Naive thymus-derived CD4-positive, alpha-beta T cell (primary cell): ENCODE measurements at regions of chr6 and their contacts with region 1.

Region 1: DNA sequence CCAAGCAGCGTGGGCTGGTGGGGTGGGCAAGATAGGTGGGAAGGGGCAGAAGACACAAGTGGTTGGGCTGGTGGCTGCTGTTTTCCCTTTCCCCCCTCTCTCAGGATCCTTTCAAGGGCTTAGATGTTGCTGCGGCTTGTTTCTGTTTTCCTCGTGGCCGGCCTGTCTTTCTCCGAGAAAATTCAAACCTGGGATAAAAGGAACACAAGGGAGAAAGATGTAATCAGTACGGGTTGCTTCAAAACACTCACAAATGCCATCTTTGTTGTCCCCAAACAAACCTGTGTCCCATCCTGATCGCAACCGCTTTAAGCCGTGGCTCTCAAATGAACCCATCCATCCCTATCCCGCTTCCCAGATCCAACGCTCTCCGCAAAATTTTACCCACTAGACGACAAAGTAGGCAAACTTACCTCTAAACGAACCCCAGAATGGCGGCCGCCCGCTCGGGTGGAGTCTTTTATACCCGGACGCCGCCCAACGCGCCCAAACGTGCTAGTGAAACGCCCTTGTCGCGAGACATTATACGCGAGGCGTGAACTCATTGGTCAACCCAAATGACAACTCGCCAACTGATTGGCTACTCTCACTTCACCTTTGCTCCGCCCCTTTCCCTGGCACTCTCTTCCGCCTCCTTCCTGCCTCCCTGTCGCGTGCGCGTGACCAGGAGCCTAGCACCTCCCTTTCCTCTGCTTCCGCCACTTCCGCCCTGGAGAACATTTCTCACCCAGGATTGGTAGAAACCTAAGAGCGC is at the start of gene PPP1R10:
- DNase-seq: peak; percentile 86 to 100 (median 99)
- ATAC-seq: peak; percentile 89
- H3K4me3 ChIP-seq: peak within 1 kb of the TSS; percentile 90
- H3K4me3 Mint-ChIP-seq: peak within 1 kb of the TSS; percentile 88 to 100 (median 96)
- H3K27ac ChIP-seq: peak within 1 kb of the TSS; percentile 93
- H3K27ac Mint-ChIP-seq: peak within 1 kb of the TSS; percentile 98 to 100 (median 100)
- H3K4me1 ChIP-seq: peaks cover 21 to 33% of the 10 kb centered on the region in 2 donors
- H3K4me1 Mint-ChIP-seq: peaks cover 28 to 51% (median 43%) of the 10 kb centered on the region in 7 donors
- H3K27me3 ChIP-seq: no peaks in the 10 kb centered on the region
- H3K27me3 Mint-ChIP-seq: peaks cover 0 to 14% (median 0%) of the 10 kb centered on the region in 5 donors
- total RNA-seq, gene PPP1R10: 108 to 286 (median 146) TPM

Region 2: GRCh38 chr6:29097803-29098202 is 1519.2 kb before region 1 on chr6:
- CTCF ChIA-PET with region 1: no interaction called
- POLR2A ChIA-PET with region 1: no interaction called
- intact Hi-C with region 1: no loop called
- DNase-seq: no peak
- ATAC-seq: no peak
- H3K4me3 ChIP-seq: no peak overlapping the region
- H3K4me3 Mint-ChIP-seq: no peak overlapping the region
- H3K27ac ChIP-seq: no peak overlapping the region
- H3K27ac Mint-ChIP-seq: no peak overlapping the region
- H3K4me1 ChIP-seq: no peaks in the 10 kb centered on the region
- H3K4me1 Mint-ChIP-seq: no peaks in the 10 kb centered on the region
- H3K27me3 ChIP-seq: no peaks in the 10 kb centered on the region
- H3K27me3 Mint-ChIP-seq: peaks cover 18 to 55% (median 31%) of the 10 kb centered on the region in 5 donors

Region 3: GRCh38 chr6:29942275-29943052 is 674.5 kb before region 1 on chr6 and contains the start of gene HLA-A:
- CTCF ChIA-PET with region 1: no interaction called
- POLR2A ChIA-PET with region 1: no interaction called
- intact Hi-C with region 1: loop called in 1 of 2 experiments (anchors 5 kb)
- DNase-seq: peak; percentile 76 to 97 (median 92)
- ATAC-seq: peak; percentile 91
- H3K4me3 ChIP-seq: peak within 1 kb of the TSS; percentile 98
- H3K4me3 Mint-ChIP-seq: peak within 1 kb of the TSS; percentile 87 to 99 (median 97)
- H3K27ac ChIP-seq: peak within 1 kb of the TSS; percentile 99
- H3K27ac Mint-ChIP-seq: peak within 1 kb of the TSS; percentile 99 to 100 (median 100)
- H3K4me1 ChIP-seq: peaks cover 24 to 35% of the 10 kb centered on the region in 2 donors
- H3K4me1 Mint-ChIP-seq: peaks cover 32 to 52% (median 47%) of the 10 kb centered on the region in 7 donors
- H3K27me3 ChIP-seq: no peaks in the 10 kb centered on the region
- H3K27me3 Mint-ChIP-seq: peaks cover 0 to 6% (median 0%) of the 10 kb centered on the region in 5 donors
- total RNA-seq, gene HLA-A: 1,540 to 2,258 (median 1,836) TPM

Region 4: GRCh38 chr6:30459145-30459544 is 157.8 kb before region 1 on chr6:
- CTCF ChIA-PET with region 1: no interaction called
- POLR2A ChIA-PET with region 1: no interaction called
- intact Hi-C with region 1: no loop called
- DNase-seq: no peak
- ATAC-seq: no peak
- H3K4me3 ChIP-seq: no peak overlapping the region
- H3K4me3 Mint-ChIP-seq: no peak overlapping the region
- H3K27ac ChIP-seq: no peak overlapping the region
- H3K27ac Mint-ChIP-seq: peak overlapping the region in 1 of 9 donors; percentile 30
- H3K4me1 ChIP-seq: peaks cover 13 to 21% of the 10 kb centered on the region in 2 donors
- H3K4me1 Mint-ChIP-seq: peaks cover 5 to 31% (median 26%) of the 10 kb centered on the region in 7 donors
- H3K27me3 ChIP-seq: peaks cover 33 to 46% of the 10 kb centered on the region in 2 donors
- H3K27me3 Mint-ChIP-seq: peaks cover 86 to 97% (median 90%) of the 10 kb centered on the region in 5 donors

Region 5: DNA sequence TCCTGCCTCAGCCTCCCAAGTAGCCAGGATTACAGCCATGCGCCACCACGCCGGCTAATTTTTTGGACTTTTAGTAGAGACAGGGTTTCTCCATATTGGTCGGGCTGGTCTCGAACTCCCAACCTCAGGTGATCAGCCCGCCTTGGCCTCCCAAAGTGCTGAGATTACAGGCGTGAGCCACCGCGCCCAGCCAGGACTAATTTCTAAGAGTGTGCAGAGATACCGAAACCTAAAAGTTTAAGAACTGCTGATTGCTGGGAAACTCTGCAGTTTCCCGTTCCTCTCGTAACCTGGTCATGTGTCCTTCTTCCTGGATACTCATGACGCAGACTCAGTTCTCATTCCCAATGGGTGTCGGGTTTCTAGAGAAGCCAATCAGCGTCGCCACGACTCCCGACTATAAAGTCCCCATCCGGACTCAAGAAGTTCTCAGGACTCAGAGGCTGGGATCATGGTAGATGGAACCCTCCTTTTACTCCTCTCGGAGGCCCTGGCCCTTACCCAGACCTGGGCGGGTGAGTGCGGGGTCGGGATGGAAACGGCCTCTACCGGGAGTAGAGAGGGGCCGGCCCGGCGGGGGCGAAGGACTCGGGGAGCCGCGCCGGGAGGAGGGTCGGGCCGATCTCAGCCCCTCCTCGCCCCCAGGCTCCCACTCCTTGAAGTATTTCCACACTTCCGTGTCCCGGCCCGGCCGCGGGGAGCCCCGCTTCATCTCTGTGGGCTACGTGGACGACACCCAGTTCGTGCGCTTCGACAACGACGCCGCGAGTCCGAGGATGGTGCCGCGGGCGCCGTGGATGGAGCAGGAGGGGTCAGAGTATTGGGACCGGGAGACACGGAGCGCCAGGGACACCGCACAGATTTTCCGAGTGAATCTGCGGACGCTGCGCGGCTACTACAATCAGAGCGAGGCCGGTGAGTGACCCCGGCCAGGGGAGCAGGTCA is 127.6 kb before region 1 on chr6 and contains the start of gene HLA-E:
- CTCF ChIA-PET with region 1: interaction called, 3 read pairs
- POLR2A ChIA-PET with region 1: interaction called, 36 read pairs
- intact Hi-C with region 1: loop called (anchors 1 kb)
- DNase-seq: peak; percentile 62 to 99 (median 95)
- ATAC-seq: peak; percentile 89
- H3K4me3 ChIP-seq: peak within 1 kb of the TSS; percentile 83
- H3K4me3 Mint-ChIP-seq: peak within 1 kb of the TSS; percentile 94 to 100 (median 99)
- H3K27ac ChIP-seq: peak within 1 kb of the TSS; percentile 97
- H3K27ac Mint-ChIP-seq: peak within 1 kb of the TSS; percentile 96 to 99 (median 99)
- H3K4me1 ChIP-seq: peaks cover 26 to 33% of the 10 kb centered on the region in 2 donors
- H3K4me1 Mint-ChIP-seq: peaks cover 33 to 61% (median 46%) of the 10 kb centered on the region in 7 donors
- H3K27me3 ChIP-seq: no peaks in the 10 kb centered on the region
- H3K27me3 Mint-ChIP-seq: peaks cover 0 to 7% (median 0%) of the 10 kb centered on the region in 5 donors
- total RNA-seq, gene HLA-E: 614 to 1,412 (median 1,095) TPM

Region 6: GRCh38 chr6:30571075-30571768 is 45.8 kb before region 1 on chr6 and contains the start of gene ABCF1:
- CTCF ChIA-PET with region 1: no interaction called
- POLR2A ChIA-PET with region 1: interaction called, 59 read pairs
- intact Hi-C with region 1: loop called (anchors 1 kb)
- DNase-seq: peak; percentile 98 to 100 (median 99)
- ATAC-seq: peak; percentile 99
- H3K4me3 ChIP-seq: peak within 1 kb of the TSS; percentile 94
- H3K4me3 Mint-ChIP-seq: peak within 1 kb of the TSS; percentile 94 to 100 (median 98)
- H3K27ac ChIP-seq: peak within 1 kb of the TSS; percentile 98
- H3K27ac Mint-ChIP-seq: peak within 1 kb of the TSS; percentile 96 to 100 (median 99)
- H3K4me1 ChIP-seq: peaks cover 33 to 38% of the 10 kb centered on the region in 2 donors
- H3K4me1 Mint-ChIP-seq: peaks cover 55 to 79% (median 64%) of the 10 kb centered on the region in 7 donors
- H3K27me3 ChIP-seq: no peaks in the 10 kb centered on the region
- H3K27me3 Mint-ChIP-seq: peaks cover 0 to 4% (median 0%) of the 10 kb centered on the region in 5 donors
- total RNA-seq, gene ABCF1: 65.1 to 116 (median 86.6) TPM

Region 7: DNA sequence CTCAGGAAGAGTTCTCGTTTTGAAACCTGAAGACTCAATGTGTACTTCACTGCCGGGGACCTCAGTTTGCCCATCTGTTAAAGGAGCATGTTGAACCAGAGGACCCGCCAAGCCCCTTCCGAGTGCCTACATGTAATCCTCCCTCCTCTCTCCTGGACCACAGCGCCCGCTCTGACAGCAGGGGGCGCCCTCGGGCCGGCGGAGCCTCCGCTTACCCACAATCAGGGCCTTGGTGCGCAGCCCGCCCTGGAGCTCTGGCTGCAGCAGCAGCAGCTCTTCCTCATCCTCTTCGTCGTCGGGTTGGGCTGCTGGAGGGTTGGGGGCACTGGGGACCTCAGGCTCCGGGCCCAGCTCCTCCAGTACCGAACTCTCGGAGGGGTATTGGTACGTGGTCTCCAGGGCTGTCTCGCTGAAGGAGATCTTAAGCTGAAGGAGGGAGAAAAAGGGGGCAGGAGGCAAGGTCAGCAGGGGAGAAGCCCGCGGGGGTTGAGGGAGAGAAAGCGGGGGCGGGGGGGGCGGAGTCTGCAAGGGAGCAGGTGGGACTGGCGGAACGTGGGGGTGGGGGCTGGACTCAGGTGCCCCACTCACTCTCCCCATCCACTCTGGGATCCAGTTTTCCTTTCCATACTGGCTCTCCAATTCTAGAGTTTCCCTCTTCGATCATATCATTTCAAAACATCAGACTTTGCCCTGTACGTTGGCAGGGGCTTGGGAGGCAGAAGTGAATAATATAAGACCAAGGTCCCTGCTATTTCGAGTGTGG is 62.2 kb after region 1 on chr6:
- CTCF ChIA-PET with region 1: interaction called, 10 read pairs
- POLR2A ChIA-PET with region 1: interaction called, 19 read pairs
- intact Hi-C with region 1: loop called (anchors 1 kb)
- DNase-seq: peak; percentile 86 to 97 (median 92)
- ATAC-seq: peak; percentile 65
- H3K4me3 ChIP-seq: peak overlapping the region; percentile 98
- H3K4me3 Mint-ChIP-seq: peak overlapping the region; percentile 90 to 100 (median 97)
- H3K27ac ChIP-seq: peak overlapping the region; percentile 95
- H3K27ac Mint-ChIP-seq: peak overlapping the region; percentile 85 to 99 (median 97)
- H3K4me1 ChIP-seq: peaks cover 5 to 24% of the 10 kb centered on the region in 2 donors
- H3K4me1 Mint-ChIP-seq: peaks cover 20 to 47% (median 38%) of the 10 kb centered on the region in 7 donors
- H3K27me3 ChIP-seq: no peaks in the 10 kb centered on the region
- H3K27me3 Mint-ChIP-seq: no peaks in the 10 kb centered on the region

Region 8: DNA sequence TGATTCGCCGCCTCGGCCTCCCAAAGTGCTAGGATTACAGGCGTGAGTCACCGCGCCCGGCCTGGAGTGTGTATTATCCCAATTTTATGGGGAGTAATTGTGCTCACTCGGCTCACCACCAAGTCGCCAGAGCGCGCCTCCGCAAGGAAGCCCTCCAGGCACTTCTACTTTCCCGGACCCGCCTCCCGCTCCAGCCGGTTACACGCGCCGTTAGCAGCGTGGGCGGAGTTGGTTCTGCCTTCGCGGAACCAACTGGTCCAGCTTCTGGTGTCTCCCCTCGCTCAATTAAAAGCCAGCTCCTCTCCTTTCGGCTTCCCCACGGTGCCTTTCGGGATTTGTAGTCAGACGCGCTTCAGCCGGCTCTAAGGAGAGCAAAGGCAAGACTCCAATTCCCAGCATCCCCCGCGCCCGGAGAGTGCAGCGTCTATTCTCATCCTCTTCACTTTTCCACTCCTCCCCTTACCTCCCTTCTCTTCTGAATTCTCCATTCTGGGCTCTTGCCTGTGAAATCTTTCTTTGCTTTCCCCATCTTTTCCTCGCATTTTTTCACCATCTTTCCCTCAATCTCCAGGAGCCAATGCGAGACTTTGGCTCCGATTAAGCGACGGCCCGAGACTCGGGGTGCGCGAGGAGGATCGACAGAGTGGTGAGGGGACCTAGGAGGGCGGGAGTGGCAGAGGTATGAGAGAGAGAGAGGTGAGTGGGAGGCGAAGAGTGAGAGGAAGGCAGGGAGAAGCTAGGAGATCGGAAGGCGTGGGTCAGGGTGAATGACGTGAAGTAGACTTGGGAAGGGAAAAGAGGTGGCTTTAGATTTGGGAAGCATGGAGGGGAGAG is 291.0 kb after region 1 on chr6 and contains the start of gene GTF2H4:
- CTCF ChIA-PET with region 1: no interaction called
- POLR2A ChIA-PET with region 1: interaction called, 3 read pairs
- intact Hi-C with region 1: loop called (anchors 1 kb)
- DNase-seq: peak; percentile 77 to 96 (median 89)
- ATAC-seq: peak; percentile 99
- H3K4me3 ChIP-seq: peak within 1 kb of the TSS; percentile 90
- H3K4me3 Mint-ChIP-seq: peak within 1 kb of the TSS; percentile 95 to 100 (median 99)
- H3K27ac ChIP-seq: peak within 1 kb of the TSS; percentile 78
- H3K27ac Mint-ChIP-seq: peak within 1 kb of the TSS; percentile 72 to 95 (median 82)
- H3K4me1 ChIP-seq: peaks cover 6 to 9% of the 10 kb centered on the region in 2 donors
- H3K4me1 Mint-ChIP-seq: peaks cover 15 to 34% (median 22%) of the 10 kb centered on the region in 7 donors
- H3K27me3 ChIP-seq: no peaks in the 10 kb centered on the region
- H3K27me3 Mint-ChIP-seq: no peaks in the 10 kb centered on the region
- total RNA-seq, gene GTF2H4: 18.8 to 42.3 (median 32.2) TPM

Region 9: DNA sequence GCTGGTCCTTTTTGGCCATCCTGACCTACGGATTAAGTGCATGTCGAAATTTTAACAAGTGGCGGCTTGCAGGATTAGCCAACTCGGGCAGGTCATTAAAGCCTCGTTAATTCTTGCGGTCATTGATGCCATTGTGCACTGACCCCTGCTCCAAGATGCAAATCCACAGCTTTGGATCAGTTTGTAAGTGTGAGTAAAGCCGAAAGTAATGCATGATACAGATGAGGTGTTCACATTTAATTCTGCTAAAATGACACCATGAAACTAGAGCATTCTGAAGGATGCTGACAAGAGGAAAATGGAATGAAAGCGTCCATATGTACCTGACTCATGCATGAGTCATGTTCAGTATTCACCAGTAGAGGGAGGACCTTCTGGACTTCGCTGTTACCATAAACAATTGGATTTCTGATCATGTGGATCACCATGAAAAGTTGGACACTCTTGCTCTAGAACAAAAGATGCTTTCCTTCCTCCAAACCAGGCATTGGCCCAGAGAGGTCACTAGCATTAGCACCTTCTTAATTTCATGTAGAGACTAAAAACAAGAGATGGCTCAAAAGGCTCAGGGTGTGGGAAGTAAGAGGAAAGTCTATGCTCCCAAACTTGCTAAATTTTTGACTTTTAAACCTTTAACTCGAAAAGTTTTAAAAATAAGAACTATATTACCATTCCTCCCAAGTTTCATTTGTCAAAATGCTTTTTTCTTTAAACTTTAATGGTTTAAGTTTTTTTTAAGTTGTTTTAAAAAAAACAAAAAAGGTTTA is 441.3 kb after region 1 on chr6:
- CTCF ChIA-PET with region 1: no interaction called
- POLR2A ChIA-PET with region 1: no interaction called
- intact Hi-C with region 1: no loop called
- DNase-seq: peak in 1 of 9 donors; percentile 1
- ATAC-seq: no peak
- H3K4me3 ChIP-seq: no peak overlapping the region
- H3K4me3 Mint-ChIP-seq: no peak overlapping the region
- H3K27ac ChIP-seq: no peak overlapping the region
- H3K27ac Mint-ChIP-seq: no peak overlapping the region
- H3K4me1 ChIP-seq: no peaks in the 10 kb centered on the region
- H3K4me1 Mint-ChIP-seq: no peaks in the 10 kb centered on the region
- H3K27me3 ChIP-seq: peaks cover 3 to 4% of the 10 kb centered on the region in 2 donors
- H3K27me3 Mint-ChIP-seq: peaks cover 10 to 38% (median 15%) of the 10 kb centered on the region in 5 donors

Region 10: DNA sequence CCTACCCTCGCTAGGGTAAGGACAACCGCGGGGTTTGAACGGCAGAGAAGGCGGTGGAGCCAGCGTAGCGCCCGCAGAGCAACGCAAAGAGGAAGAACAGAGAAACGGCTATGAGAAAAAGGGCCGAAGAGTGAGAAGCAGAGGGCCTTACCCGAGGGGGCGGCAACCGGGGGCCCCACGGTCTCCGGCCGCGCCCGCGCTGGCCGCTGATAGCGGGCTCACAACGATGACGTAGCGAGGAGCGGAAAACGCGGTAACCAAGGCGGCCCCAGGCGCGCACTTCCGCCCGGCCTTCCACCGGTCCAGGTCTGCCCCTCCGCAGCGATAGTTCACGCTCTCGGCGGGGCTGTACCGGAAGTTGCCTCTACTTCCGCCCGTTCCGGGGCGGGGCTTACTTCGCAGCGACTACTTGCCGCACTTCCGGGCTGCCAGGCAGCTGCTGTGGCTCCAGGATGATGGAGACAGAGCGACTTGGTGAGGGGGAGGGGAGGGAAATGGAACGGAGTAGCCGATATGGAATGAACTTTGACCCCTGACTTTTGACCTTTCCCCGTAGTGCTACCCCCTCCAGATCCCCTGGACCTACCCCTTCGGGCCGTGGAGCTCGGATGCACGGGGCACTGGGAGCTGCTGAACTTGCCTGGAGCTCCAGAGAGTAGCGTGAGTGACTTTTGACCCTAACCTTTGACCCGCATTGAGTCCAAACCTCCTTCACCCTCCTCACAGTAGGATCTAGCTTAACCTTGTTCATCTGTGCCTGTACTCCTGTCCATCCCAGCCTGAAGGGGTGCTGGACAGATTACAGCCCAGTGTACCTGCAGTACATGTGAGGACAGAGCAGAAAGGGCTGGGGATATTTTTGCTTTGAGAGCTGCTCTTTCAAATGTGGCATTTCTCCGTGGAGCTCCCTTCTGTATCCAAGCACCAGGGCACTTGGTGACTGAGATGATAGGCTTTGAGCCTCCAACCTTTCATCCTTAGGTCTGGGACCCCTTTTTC is 1342.1 kb after region 1 on chr6 and contains the starts of genes NELFE and SKIC2:
- CTCF ChIA-PET with region 1: no interaction called
- POLR2A ChIA-PET with region 1: no interaction called
- intact Hi-C with region 1: loop called in 1 of 2 experiments (anchors 2 kb)
- DNase-seq: peak; percentile 94 to 99 (median 98)
- ATAC-seq: peak; percentile 98
- H3K4me3 ChIP-seq: peak within 1 kb of the TSS; percentile 89
- H3K4me3 Mint-ChIP-seq: peak within 1 kb of the TSS; percentile 91 to 100 (median 97)
- H3K27ac ChIP-seq: peak within 1 kb of the TSS; percentile 99
- H3K27ac Mint-ChIP-seq: peak within 1 kb of the TSS; percentile 91 to 99 (median 97)
- H3K4me1 ChIP-seq: peaks cover 18 to 20% of the 10 kb centered on the region in 2 donors
- H3K4me1 Mint-ChIP-seq: peaks cover 23 to 50% (median 39%) of the 10 kb centered on the region in 7 donors
- H3K27me3 ChIP-seq: no peaks in the 10 kb centered on the region
- H3K27me3 Mint-ChIP-seq: no peaks in the 10 kb centered on the region
- total RNA-seq, gene NELFE: 47.5 to 71.7 (median 59.1) TPM
- total RNA-seq, gene SKIC2: 85.6 to 139 (median 101) TPM